Activated T-helper 1 cell treated with anti-CD3 and anti-CD28 coated beads, Interleukin-12 subunit alpha, Interleukin-12 subunit beta, Interleukin-2, Interleukin-4 antibody, amounts not matched to agents 30 ng/mL and 10 ng/mL and 1 ng/mL, durations not matched to agents 14 hours and 24 hours and 36 hours (primary cell): ENCODE measurements at regions of chr15 and their contacts with region 1.

Region 1: DNA sequence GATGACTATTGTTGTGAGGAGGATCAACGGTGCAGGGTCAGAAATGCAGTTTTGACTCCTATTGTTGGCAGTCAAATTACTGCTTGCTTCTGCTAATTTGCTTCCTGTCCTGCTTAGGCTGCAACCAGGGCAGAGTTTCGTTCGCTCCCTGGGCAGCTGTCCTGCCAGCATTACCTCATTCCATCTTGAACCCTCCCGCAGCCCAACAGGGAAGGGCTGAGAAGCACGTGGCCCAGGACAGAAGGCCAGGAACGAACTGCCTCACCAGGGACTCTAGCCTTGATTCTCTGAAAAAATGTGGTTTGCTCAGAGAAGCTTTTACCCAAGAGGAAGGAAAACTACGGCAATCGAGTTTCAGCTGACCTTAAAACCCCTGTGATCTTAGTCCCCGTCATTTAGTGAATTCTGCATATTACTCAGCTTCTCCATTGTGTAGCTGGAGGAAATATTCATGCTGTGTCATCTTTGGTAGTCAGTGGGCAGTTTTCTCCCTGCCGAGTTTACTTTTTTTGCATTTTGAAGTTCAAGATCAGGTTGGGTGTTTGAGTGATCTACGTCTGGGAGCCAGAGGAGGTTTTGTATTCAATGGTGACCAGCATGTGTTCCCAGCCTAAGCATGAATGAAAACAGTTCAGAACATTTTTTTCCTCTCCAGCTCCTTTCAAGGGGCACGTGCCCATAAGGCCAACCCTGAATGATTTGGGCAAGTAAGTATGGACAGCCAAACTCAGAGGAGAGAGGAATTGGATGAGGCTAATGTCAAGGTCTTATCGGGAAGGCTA is 23.0 kb downstream of the TLNRD1 start:
- DNase-seq: peak; percentile 35
- H3K4me3 Mint-ChIP-seq: peak overlapping the region; percentile 51
- H3K27ac Mint-ChIP-seq: peak overlapping the region; percentile 96
- H3K4me1 Mint-ChIP-seq: peaks cover 43% of the 10 kb centered on the region
- H3K27me3 Mint-ChIP-seq: no peaks in the 10 kb centered on the region

Region 2: DNA sequence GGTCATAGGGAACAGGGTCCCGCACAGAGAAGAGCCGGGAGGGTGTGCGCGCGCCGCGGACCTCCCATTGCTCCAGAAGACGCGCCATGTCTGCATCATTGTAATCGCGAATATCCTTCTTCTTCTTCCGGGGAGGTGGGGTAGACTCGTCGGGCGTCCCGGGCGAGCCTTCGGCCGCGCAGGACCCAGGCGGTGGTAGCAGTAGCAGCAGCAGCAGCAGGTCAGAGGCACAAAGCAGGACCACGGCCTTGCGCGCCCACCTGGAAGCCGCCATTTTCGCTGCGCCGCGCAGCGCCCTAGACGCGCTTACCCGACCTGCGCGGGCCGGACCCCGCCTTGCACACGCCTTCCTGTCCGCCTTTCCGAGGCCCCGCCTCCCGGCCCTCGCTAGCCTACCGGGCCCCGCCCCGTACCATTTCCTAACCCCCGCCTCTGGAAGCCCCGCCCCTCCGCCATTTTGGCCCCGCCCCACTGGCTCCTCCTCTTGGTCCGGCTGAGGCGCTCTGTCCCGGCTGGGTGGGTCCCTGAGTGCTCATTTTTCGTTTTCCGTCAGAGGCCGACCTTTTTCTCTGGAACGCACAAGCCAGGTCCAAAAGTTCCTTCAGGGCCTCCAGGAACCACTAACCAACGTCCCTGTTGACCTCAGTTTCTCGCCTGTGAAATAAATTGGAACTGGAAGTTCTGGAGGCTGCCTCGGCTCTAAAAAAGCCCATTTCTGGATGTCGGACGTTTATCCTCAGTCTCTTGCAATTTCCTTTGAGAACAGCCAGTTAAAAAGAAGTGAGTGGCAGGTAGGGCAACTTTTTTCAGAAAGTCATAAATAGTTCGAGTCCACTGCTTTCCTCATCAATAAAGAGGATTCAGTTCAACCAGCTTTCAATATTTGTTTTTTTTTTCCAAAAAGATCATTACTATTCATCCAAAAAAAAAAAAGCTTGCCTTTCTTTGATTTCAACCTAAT is 33.9 kb before region 1 on chr15 and contains the start of gene MESD:
- intact Hi-C with region 1: loop called (anchors 1 kb)
- DNase-seq: peak; percentile 92
- H3K4me3 Mint-ChIP-seq: peak within 1 kb of the TSS; percentile 98
- H3K27ac Mint-ChIP-seq: peak within 1 kb of the TSS; percentile 97
- H3K4me1 Mint-ChIP-seq: peaks cover 58% of the 10 kb centered on the region
- H3K27me3 Mint-ChIP-seq: no peaks in the 10 kb centered on the region
- total RNA-seq, gene MESD: 29.5 and 30.2 TPM in 2 replicates

Region 3: DNA sequence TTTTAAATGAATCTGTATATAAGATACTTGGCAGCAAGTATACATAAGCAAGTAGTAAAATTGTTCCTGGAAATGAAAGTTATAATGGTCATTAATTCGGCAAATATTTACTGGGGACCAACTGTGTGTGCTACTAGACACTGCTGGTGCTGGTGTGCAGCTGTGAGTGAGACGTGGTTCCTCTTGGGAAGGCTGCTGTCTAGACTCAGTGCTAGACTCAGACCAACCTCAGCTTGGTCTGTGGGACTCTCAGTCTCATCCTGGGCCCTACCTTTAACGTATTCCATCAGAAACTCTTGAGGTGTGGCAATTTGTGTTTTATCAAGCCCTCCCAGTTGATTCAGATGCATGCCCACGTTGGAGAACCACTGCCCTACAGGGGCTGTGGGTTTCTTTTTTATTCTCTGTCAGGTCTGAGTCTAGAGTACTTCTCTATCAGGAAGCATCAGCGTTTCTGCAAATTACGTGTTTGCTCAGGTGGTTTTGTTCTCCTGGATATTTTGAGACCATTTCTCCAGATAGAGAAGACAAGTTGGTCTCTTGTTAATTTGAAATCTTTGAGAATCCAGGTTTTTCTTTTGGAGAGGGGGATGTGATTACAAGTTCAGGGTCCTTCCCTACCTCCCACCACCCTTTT is 16.1 kb before region 1 on chr15:
- intact Hi-C with region 1: loop called (anchors 1 kb)
- DNase-seq: no peak
- H3K4me3 Mint-ChIP-seq: no peak overlapping the region
- H3K27ac Mint-ChIP-seq: no peak overlapping the region
- H3K4me1 Mint-ChIP-seq: peaks cover 70% of the 10 kb centered on the region
- H3K27me3 Mint-ChIP-seq: no peaks in the 10 kb centered on the region

Region 4: DNA sequence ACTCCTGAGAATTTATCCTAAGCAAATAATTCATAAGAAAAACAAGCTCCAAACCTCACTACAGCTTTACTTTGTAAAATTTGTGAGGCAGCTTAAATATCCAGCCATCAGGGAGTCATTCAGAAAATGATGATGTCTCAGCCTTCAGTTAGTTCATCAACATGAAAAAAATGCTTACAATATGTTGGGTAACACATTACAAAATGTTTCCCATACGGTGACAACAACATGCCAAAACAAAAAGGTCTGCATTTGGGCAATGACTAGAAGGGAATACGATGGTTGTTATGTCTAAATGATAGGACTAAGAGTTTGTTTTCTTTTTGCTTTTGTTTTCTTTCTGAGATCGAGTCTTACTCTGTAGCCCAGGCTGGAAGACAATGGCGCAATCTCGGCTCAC is 63.4 kb after region 1 on chr15:
- intact Hi-C with region 1: loop called (anchors 5 kb)
- DNase-seq: no peak
- H3K4me3 Mint-ChIP-seq: no peak overlapping the region
- H3K27ac Mint-ChIP-seq: no peak overlapping the region
- H3K4me1 Mint-ChIP-seq: peaks cover 15% of the 10 kb centered on the region
- H3K27me3 Mint-ChIP-seq: peaks cover 16% of the 10 kb centered on the region

Region 5: GRCh38 chr15:81296673-81297072 is 273.0 kb after region 1 on chr15:
- intact Hi-C with region 1: loop called (anchors 1 kb)
- DNase-seq: peak; percentile 77
- H3K4me3 Mint-ChIP-seq: peak overlapping the region; percentile 97
- H3K27ac Mint-ChIP-seq: peak overlapping the region; percentile 94
- H3K4me1 Mint-ChIP-seq: peaks cover 95% of the 10 kb centered on the region
- H3K27me3 Mint-ChIP-seq: no peaks in the 10 kb centered on the region

Region 6: GRCh38 chr15:81427176-81427575 is 403.5 kb after region 1 on chr15:
- intact Hi-C with region 1: no loop called
- DNase-seq: no peak
- H3K4me3 Mint-ChIP-seq: no peak overlapping the region
- H3K27ac Mint-ChIP-seq: no peak overlapping the region
- H3K4me1 Mint-ChIP-seq: no peaks in the 10 kb centered on the region
- H3K27me3 Mint-ChIP-seq: peaks cover 13% of the 10 kb centered on the region